Esophagus muscularis mucosa (tissue), 4 donors: ENCODE measurements at regions of chr6 and their contacts with region 1.

Region 1: GRCh38 chr6:16514249-16514648 is 247.0 kb downstream of the ATXN1 start:
- DNase-seq: no peak
- H3K4me3 ChIP-seq: no peak overlapping the region
- H3K27ac ChIP-seq: no peak overlapping the region
- H3K4me1 ChIP-seq: peaks cover 21 to 34% (median 29%) of the 10 kb centered on the region in 4 donors
- H3K27me3 ChIP-seq: no peaks in the 10 kb centered on the region
- CTCF ChIP-seq: peak in 1 of 3 experiments; percentile 37
- EP300 ChIP-seq: no peak
- POLR2A ChIP-seq: no peak

Region 2: DNA sequence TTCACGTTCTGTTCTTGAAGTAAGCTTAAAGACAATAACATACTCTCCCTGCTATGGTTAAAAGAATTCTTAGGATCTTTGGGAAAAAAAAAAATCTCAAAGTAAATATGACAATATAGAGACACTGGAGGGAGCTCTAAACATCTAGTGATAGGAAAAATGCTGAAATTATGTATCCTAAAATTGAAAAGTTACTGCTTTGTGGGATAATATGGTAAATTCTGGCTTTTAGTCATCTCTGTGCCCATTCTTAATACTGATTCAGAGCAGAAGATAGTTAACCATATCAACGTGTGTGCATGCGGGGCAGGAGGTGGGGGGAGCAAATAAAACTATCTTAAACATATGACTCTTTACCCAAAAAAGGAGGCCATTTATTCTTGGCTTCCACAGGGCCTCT is 110.4 kb before region 1 on chr6:
- intact Hi-C with region 1: no loop called
- DNase-seq: no peak
- H3K4me3 ChIP-seq: no peak overlapping the region
- H3K27ac ChIP-seq: no peak overlapping the region
- H3K4me1 ChIP-seq: peaks cover 8 to 67% (median 54%) of the 10 kb centered on the region in 4 donors
- H3K27me3 ChIP-seq: no peaks in the 10 kb centered on the region
- CTCF ChIP-seq: no peak
- EP300 ChIP-seq: no peak
- POLR2A ChIP-seq: no peak

Region 3: GRCh38 chr6:16761471-16762267 is 247.4 kb after region 1 on chr6:
- intact Hi-C with region 1: loop called (anchors 2 kb)
- DNase-seq: peak; percentile 97
- H3K4me3 ChIP-seq: peak overlapping the region; percentile 94 to 100 (median 96)
- H3K27ac ChIP-seq: peak overlapping the region; percentile 99 to 100 (median 100)
- H3K4me1 ChIP-seq: peaks cover 27 to 54% (median 47%) of the 10 kb centered on the region in 4 donors
- H3K27me3 ChIP-seq: no peaks in the 10 kb centered on the region
- CTCF ChIP-seq: peak in 2 of 3 experiments; percentile 34 to 38
- EP300 ChIP-seq: no peak
- POLR2A ChIP-seq: no peak